ENCODE measurements at regions of chr22 and their contacts with region 1.

Region 1: GRCh38 chr22:34380532-34380931 is 460.3 kb upstream of the LARGE1 start:
- DNase-seq: no peak
- ATAC-seq: no peak
- H3K4me3 ChIP-seq: no peak overlapping the region
- H3K27ac ChIP-seq: no peak overlapping the region
- H3K4me1 ChIP-seq: no peaks in the 10 kb centered on the region
- H3K27me3 ChIP-seq: no peaks in the 10 kb centered on the region
- CTCF ChIP-seq: no peak
- POLR2A ChIP-seq: no peak

Region 2: DNA sequence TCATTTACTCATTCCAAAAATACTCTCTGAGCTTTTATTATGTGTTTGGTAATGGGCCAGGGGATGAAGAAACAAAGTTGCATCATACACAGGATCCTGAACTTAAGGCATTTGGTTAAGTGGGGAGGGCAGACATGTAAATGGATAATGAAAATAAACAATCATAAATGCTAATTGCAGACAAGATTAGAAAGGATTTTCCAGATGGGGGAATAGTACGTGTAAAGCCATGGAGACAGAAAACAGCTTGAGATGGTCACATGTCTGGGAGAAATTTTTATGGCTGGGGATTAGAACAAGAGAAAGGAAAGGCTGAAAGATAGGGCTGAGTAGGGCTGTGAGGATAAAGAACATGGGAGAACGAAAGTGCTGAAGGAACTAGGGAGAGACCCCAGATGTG is 74.1 kb after region 1 on chr22:
- intact Hi-C with region 1: loop called in 1 of 10 experiments (anchors 10 kb)
- DNase-seq: no peak
- ATAC-seq: no peak
- H3K4me3 ChIP-seq: no peak overlapping the region
- H3K27ac ChIP-seq: no peak overlapping the region
- H3K4me1 ChIP-seq: no peaks in the 10 kb centered on the region
- H3K27me3 ChIP-seq: peaks cover 0 to 15% (median 0%) of the 10 kb centered on the region in 9 donors
- CTCF ChIP-seq: no peak
- POLR2A ChIP-seq: no peak

Region 3: GRCh38 chr22:34800260-34800980 is 419.9 kb after region 1 on chr22:
- intact Hi-C with region 1: no loop called
- DNase-seq: peak in 2 of 5 donors; percentile 8 to 21
- ATAC-seq: peak in 3 of 4 donors; percentile 27 to 53 (median 30)
- H3K4me3 ChIP-seq: no peak overlapping the region
- H3K27ac ChIP-seq: no peak overlapping the region
- H3K4me1 ChIP-seq: peaks cover 0 to 7% (median 0%) of the 10 kb centered on the region in 12 donors
- H3K27me3 ChIP-seq: peaks cover 0 to 4% (median 0%) of the 10 kb centered on the region in 9 donors
- CTCF ChIP-seq: no peak
- POLR2A ChIP-seq: no peak

Measured in heart left ventricle (tissue), 16 donors.